ENCODE measurements at regions of chr7 and their contacts with region 1.

Region 1: DNA sequence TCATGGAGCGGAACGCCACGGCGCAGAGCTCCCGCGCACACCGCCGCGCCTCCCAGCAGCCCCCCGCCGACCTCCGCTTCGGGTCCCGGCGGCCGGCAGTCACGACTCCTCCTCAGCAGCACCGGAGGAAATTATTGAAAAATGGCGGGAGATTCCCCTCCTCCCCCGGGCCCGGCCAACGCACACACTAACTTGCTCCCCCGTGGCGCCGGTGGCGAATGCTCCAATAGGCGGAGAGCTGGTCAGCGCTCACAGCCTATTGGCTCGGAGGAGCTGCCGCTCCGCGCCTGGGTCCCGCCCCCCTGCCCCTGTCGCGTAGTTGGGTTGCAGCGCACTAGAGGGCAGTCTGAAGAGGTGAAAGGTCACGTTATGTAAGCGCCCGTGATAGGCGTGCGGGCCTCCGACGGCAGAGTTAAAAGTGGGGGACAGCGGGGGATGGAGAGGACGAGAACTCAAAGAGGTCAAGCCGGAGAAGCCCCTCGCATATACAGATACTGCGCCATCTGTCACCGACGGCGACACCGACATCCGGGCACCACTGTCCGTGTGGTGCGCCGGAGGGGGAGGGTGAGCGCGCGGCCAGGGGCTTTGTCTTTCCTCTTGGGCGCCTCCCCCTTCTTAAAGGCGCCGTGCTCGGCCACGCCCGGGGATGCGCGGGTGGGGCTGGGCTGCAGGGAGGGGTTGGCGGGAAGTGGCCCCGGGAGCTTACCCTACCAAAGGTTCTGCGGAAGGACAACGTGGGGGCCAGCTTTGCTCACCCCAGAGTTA is at the start of gene BAZ1B:
- DNase-seq: peak; percentile 92 to 98 (median 96)
- ATAC-seq: peak; percentile 93
- H3K4me3 ChIP-seq: peak within 1 kb of the TSS; percentile 65 to 87
- H3K4me3 Mint-ChIP-seq: peak within 1 kb of the TSS; percentile 93
- H3K27ac ChIP-seq: peak within 1 kb of the TSS; percentile 90 to 92
- H3K27ac Mint-ChIP-seq: peak within 1 kb of the TSS; percentile 96
- H3K4me1 ChIP-seq: peaks cover 59% of the 10 kb centered on the region
- H3K4me1 Mint-ChIP-seq: peaks cover 66% of the 10 kb centered on the region
- H3K27me3 ChIP-seq: no peaks in the 10 kb centered on the region
- H3K27me3 Mint-ChIP-seq: no peaks in the 10 kb centered on the region
- CTCF ChIP-seq: no peak
- total RNA-seq, gene BAZ1B: 32.2 to 37.2 TPM

Region 2: DNA sequence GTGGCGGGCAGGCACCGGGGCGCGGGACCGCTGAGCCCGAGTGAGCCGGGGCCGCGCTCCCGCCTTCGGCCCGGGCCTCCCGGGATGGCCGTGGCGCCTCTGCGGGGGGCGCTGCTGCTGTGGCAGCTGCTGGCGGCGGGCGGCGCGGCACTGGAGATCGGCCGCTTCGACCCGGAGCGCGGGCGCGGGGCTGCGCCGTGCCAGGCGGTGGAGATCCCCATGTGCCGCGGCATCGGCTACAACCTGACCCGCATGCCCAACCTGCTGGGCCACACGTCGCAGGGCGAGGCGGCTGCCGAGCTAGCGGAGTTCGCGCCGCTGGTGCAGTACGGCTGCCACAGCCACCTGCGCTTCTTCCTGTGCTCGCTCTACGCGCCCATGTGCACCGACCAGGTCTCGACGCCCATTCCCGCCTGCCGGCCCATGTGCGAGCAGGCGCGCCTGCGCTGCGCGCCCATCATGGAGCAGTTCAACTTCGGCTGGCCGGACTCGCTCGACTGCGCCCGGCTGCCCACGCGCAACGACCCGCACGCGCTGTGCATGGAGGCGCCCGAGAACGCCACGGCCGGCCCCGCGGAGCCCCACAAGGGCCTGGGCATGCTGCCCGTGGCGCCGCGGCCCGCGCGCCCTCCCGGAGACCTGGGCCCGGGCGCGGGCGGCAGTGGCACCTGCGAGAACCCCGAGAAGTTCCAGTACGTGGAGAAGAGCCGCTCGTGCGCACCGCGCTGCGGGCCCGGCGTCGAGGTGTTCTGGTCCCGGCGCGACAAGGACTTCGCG is 88.2 kb before region 1 on chr7:
- CTCF ChIA-PET with region 1: no interaction called
- POLR2A ChIA-PET with region 1: no interaction called
- intact Hi-C with region 1: loop called in 1 of 2 experiments (anchors 1 kb)
- DNase-seq: peak in 3 of 9 experiments; percentile 22 to 57 (median 52)
- ATAC-seq: peak; percentile 32
- H3K4me3 ChIP-seq: no peak overlapping the region
- H3K4me3 Mint-ChIP-seq: peak overlapping the region; percentile 45
- H3K27ac ChIP-seq: no peak overlapping the region
- H3K27ac Mint-ChIP-seq: no peak overlapping the region
- H3K4me1 ChIP-seq: no peaks in the 10 kb centered on the region
- H3K4me1 Mint-ChIP-seq: peaks cover 5% of the 10 kb centered on the region
- H3K27me3 ChIP-seq: peaks cover 0 to 3% of the 10 kb centered on the region in 2 experiments
- H3K27me3 Mint-ChIP-seq: peaks cover 7% of the 10 kb centered on the region
- CTCF ChIP-seq: no peak

Region 3: DNA sequence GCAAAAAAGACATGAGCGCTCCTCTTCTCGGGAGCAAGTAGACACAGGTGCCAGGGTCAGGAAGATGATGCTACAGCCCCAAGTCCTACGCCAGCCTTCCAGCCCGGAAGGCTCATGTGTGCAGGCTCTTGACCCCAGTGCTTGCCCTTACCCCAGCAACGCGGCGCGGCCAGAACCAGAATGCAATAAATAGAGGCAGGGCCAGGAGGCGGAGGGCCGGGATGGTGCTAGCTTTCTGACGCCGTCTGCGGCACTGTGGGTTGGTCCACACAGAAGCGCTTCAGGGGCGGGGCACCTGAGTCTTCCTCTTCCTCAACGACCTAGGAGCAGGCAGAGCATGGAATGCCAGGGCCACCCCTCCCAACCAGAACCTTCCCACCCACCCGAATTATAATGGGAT is 14.8 kb after region 1 on chr7:
- CTCF ChIA-PET with region 1: no interaction called
- POLR2A ChIA-PET with region 1: interaction called, 12 read pairs
- intact Hi-C with region 1: no loop called
- DNase-seq: no peak
- ATAC-seq: no peak
- H3K4me3 ChIP-seq: no peak overlapping the region
- H3K4me3 Mint-ChIP-seq: no peak overlapping the region
- H3K27ac ChIP-seq: no peak overlapping the region
- H3K27ac Mint-ChIP-seq: no peak overlapping the region
- H3K4me1 ChIP-seq: no peaks in the 10 kb centered on the region
- H3K4me1 Mint-ChIP-seq: peaks cover 4% of the 10 kb centered on the region
- H3K27me3 ChIP-seq: no peaks in the 10 kb centered on the region
- H3K27me3 Mint-ChIP-seq: no peaks in the 10 kb centered on the region
- CTCF ChIP-seq: no peak

Region 4: DNA sequence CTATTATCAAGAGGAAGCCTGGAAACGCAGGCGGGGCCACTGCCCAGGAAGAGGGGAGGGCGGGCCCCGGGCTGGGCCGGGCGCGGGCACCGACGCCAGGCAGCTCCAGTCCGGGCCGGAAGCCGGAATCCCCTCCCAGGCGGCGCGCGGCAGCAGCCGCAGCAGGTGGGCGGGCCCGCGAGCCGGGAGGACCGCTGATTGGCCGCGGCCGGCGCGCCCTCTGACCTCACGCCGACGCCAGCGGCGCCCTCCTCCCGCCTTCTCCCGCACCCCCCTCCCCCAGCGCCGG is 34.8 kb after region 1 on chr7:
- CTCF ChIA-PET with region 1: interaction called, 4 read pairs
- POLR2A ChIA-PET with region 1: interaction called, 50 read pairs
- intact Hi-C with region 1: loop called (anchors 1 kb)
- DNase-seq: peak; percentile 79 to 96 (median 90)
- ATAC-seq: peak; percentile 91
- H3K4me3 ChIP-seq: peak overlapping the region; percentile 83 to 84
- H3K4me3 Mint-ChIP-seq: peak overlapping the region; percentile 95
- H3K27ac ChIP-seq: peak overlapping the region; percentile 98 to 99
- H3K27ac Mint-ChIP-seq: peak overlapping the region; percentile 99
- H3K4me1 ChIP-seq: peaks cover 23% of the 10 kb centered on the region
- H3K4me1 Mint-ChIP-seq: peaks cover 36% of the 10 kb centered on the region
- H3K27me3 ChIP-seq: no peaks in the 10 kb centered on the region
- H3K27me3 Mint-ChIP-seq: no peaks in the 10 kb centered on the region
- CTCF ChIP-seq: no peak

Region 5: DNA sequence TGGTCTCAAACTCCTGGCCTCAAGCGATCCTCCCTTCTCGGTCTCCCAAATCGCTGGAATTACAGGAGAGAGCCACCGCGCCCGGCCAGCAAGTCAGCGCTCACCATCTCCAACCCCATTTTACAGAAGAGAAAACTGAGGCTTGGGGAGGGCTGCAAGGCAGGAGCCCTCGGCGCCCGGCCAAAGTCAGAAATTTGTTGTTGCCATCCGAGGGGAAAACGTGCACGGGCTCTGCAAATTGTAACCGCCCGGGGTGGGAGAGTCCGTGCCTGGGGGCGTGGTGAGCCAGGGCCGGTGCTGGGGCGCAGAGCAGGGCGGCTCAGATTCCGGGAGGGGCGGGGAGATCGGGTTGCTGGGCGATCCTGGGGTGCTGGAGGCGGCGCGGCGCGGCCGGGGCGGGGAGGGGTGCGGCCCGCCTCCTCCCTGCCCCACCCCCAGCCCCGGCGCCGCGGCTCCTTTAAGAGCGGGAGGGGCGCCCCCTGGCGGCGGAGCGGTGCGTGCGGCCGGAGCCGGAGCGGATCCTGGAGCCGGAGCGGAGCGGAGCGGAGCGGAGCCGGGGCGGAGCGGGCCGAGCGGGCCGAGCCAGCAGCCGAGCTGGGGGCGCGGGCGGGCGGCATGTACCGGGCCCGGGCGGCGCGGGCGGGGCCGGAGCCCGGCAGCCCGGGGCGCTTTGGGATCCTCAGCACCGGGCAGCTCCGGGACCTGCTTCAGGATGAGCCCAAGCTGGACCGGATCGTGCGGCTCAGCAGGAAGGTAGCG is 145.2 kb after region 1 on chr7 and contains the start of gene VPS37D:
- CTCF ChIA-PET with region 1: no interaction called
- POLR2A ChIA-PET with region 1: no interaction called
- intact Hi-C with region 1: loop called in 1 of 2 experiments (anchors 2 kb)
- DNase-seq: peak; percentile 84 to 98 (median 93)
- ATAC-seq: peak; percentile 92
- H3K4me3 ChIP-seq: peak within 1 kb of the TSS; percentile 37 to 42
- H3K4me3 Mint-ChIP-seq: peak within 1 kb of the TSS; percentile 83
- H3K27ac ChIP-seq: no peak within 1 kb of the TSS
- H3K27ac Mint-ChIP-seq: no peak within 1 kb of the TSS
- H3K4me1 ChIP-seq: peaks cover 11% of the 10 kb centered on the region
- H3K4me1 Mint-ChIP-seq: peaks cover 7% of the 10 kb centered on the region
- H3K27me3 ChIP-seq: peaks cover 0 to 17% of the 10 kb centered on the region in 2 experiments
- H3K27me3 Mint-ChIP-seq: peaks cover 24% of the 10 kb centered on the region
- CTCF ChIP-seq: peak; percentile 62
- total RNA-seq, gene VPS37D: 0.89 to 1.3 TPM

Region 6: DNA sequence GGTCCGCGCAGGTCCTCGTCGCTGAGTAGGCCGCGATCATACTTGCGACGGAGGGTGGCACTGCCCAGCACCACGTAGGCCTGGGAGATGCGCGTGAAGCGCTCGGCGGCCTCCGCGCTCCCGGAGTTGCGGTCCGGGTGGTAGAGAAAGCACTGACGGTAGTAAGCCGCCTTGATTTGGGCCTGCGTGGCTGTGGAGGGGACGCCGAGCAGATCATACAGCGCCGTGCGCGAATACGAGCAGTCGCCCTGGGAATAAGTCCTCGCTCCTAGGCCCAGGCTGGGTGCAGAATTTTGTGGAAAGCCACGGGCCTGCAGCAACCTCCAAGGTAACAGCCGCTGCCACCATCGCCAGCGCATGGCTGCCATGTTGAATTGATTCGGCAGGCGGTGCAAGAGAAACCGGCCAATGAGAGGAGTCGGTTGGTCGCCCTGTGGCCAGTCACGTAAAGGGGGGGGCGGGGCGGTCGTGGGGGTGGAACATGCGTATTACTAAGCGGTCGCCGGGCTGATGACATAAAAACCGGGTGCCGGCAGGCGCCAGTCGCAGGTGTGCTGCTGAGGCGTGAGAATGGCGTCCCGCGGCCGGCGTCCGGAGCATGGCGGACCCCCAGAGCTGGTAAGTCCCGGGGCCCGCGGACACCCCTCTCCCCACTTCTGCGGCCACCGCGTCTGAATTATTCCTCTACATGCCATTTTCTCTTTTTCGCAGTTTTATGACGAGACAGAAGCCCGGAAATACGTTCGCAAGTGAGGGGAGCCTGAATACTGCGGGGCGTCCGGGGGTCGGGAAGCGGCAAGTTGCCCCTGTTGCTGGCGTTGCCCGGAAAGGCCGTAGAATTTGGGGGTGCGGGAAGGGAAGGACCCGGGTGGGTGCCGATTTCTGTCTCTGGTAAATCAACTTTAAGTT is 161.0 kb after region 1 on chr7 and contains the starts of genes BUD23 and DNAJC30:
- CTCF ChIA-PET with region 1: no interaction called
- POLR2A ChIA-PET with region 1: no interaction called
- intact Hi-C with region 1: loop called (anchors 1 to 5 kb)
- DNase-seq: peak; percentile 95 to 97 (median 97)
- ATAC-seq: peak; percentile 98
- H3K4me3 ChIP-seq: peak within 1 kb of the TSS; percentile 80 to 96
- H3K4me3 Mint-ChIP-seq: peak within 1 kb of the TSS; percentile 93
- H3K27ac ChIP-seq: peak within 1 kb of the TSS; percentile 81 to 90
- H3K27ac Mint-ChIP-seq: peak within 1 kb of the TSS; percentile 97
- H3K4me1 ChIP-seq: peaks cover 29% of the 10 kb centered on the region
- H3K4me1 Mint-ChIP-seq: peaks cover 39% of the 10 kb centered on the region
- H3K27me3 ChIP-seq: no peaks in the 10 kb centered on the region
- H3K27me3 Mint-ChIP-seq: no peaks in the 10 kb centered on the region
- CTCF ChIP-seq: no peak
- total RNA-seq, gene BUD23: 123 to 129 TPM
- total RNA-seq, gene DNAJC30: 13.5 to 14.4 TPM

Region 7: GRCh38 chr7:73842247-73842895 is 320.1 kb after region 1 on chr7 and contains the start of gene METTL27:
- CTCF ChIA-PET with region 1: no interaction called
- POLR2A ChIA-PET with region 1: no interaction called
- intact Hi-C with region 1: loop called in 1 of 2 experiments (anchors 5 kb)
- DNase-seq: peak; percentile 76 to 94 (median 90)
- ATAC-seq: peak; percentile 98
- H3K4me3 ChIP-seq: peak within 1 kb of the TSS; percentile 58 to 77
- H3K4me3 Mint-ChIP-seq: peak within 1 kb of the TSS; percentile 85
- H3K27ac ChIP-seq: no peak within 1 kb of the TSS
- H3K27ac Mint-ChIP-seq: peak within 1 kb of the TSS; percentile 69
- H3K4me1 ChIP-seq: peaks cover 5% of the 10 kb centered on the region
- H3K4me1 Mint-ChIP-seq: peaks cover 13% of the 10 kb centered on the region
- H3K27me3 ChIP-seq: no peaks in the 10 kb centered on the region
- H3K27me3 Mint-ChIP-seq: no peaks in the 10 kb centered on the region
- CTCF ChIP-seq: no peak
- total RNA-seq, gene METTL27: not detected

Region 8: DNA sequence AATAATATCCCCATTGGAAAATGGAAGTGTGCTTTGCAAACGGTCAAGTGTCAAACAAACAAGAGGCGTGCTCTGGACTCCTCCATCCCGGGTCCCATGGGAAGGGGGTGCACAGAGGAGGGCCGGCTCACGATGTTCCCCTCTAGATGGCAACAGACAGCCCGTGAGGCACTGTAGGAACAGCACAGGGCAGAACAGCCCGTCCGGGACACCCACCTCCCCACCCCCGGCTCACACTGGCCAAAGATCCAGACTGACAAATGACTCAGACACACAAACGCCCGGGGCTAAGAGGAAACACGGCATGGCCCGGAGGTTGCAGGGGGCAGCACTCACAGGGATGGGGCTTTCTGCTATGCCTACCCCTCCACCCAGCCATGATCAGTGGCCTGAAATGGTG is 500.7 kb after region 1 on chr7:
- CTCF ChIA-PET with region 1: no interaction called
- POLR2A ChIA-PET with region 1: no interaction called
- intact Hi-C with region 1: no loop called
- DNase-seq: no peak
- ATAC-seq: no peak
- H3K4me3 ChIP-seq: no peak overlapping the region
- H3K4me3 Mint-ChIP-seq: no peak overlapping the region
- H3K27ac ChIP-seq: no peak overlapping the region
- H3K27ac Mint-ChIP-seq: no peak overlapping the region
- H3K4me1 ChIP-seq: no peaks in the 10 kb centered on the region
- H3K4me1 Mint-ChIP-seq: peaks cover 4% of the 10 kb centered on the region
- H3K27me3 ChIP-seq: peaks cover 0 to 10% of the 10 kb centered on the region in 2 experiments
- H3K27me3 Mint-ChIP-seq: peaks cover 26% of the 10 kb centered on the region
- CTCF ChIP-seq: no peak